ENCODE measurements at regions of chr2 and their contacts with region 1.

Region 1: DNA sequence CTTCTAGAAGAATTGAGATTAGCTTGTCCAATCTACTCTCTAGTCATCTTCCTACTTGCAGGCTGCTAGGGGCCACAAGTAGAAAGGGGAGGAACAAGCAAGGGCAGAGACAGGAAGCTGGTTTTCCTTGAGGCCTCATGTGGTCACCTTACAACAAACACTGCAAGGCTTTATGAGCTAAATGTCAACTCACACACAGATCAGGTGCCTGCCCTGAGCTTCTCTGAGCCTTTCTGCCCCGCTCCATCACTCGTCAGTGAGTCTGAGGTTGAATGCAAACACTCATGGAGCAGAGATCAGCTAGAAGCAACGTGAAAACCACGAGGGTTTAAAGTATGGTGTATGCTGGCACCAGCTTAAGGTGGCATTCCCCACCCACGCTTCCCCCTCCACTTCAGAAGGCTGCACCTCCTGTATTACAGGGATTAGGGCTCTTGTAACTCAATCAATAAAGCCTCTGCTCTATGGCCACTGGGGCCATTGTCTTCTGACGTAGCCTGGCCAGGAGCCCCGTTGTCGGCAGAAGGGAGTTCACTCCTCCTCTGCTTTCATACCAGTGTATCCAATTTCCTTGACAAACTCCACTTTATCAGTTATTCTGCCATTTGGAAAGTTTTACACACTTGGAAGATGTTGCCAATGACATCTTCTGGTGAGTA is 5.4 kb upstream of the CRYGC start:
- DNase-seq: no peak
- H3K4me3 ChIP-seq: no peak overlapping the region
- H3K27ac ChIP-seq: no peak overlapping the region
- H3K4me1 ChIP-seq: peaks cover 0 to 8% (median 0%) of the 10 kb centered on the region in 4 donors
- H3K27me3 ChIP-seq: no peaks in the 10 kb centered on the region
- CTCF ChIP-seq: no peak
- EP300 ChIP-seq: no peak
- POLR2A ChIP-seq: no peak

Region 2: GRCh38 chr2:206832873-206833272 is 1302.2 kb before region 1 on chr2:
- in situ Hi-C with region 1: no loop called
- intact Hi-C with region 1: no loop called
- DNase-seq: no peak
- H3K4me3 ChIP-seq: no peak overlapping the region
- H3K27ac ChIP-seq: no peak overlapping the region
- H3K4me1 ChIP-seq: peaks cover 0 to 6% (median 0%) of the 10 kb centered on the region in 4 donors
- H3K27me3 ChIP-seq: no peaks in the 10 kb centered on the region
- CTCF ChIP-seq: no peak
- EP300 ChIP-seq: no peak
- POLR2A ChIP-seq: no peak

Region 3: DNA sequence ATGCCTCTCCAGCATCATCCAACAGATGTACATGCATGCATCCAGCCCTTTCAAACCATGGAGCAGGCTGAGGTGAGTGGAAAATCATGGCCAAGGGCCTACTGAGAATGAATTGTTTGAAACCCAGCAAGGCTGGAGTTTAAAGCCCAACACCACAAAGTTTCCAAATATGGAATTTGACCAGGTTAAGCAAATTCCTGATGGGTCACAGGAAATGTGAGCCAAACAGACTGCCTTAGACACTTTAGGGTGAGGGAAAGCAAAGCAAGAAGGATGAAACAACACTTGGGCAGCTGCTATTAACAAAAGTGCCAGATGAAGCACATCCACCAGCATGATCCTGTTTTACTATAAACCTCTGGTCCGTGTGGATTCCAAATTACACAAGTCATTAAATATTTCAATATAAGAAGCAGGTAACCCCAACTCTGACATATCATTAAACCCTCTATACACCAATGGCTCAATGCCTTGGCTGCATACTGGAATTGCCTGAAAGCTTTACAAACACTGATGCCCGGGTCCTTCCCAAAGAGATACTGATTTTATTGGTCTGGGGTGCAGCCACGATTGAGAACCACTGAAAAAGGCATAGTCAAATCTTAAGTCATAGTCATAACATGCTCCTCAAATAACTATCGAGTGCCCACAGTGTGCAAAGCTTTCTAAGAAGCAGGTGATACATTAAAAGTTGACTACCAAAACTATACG is 978.5 kb before region 1 on chr2:
- in situ Hi-C with region 1: no loop called
- intact Hi-C with region 1: loop called (anchors 5 kb)
- DNase-seq: no peak
- H3K4me3 ChIP-seq: no peak overlapping the region
- H3K27ac ChIP-seq: peak overlapping the region in 1 of 4 donors; percentile 38
- H3K4me1 ChIP-seq: peaks cover 19 to 81% (median 35%) of the 10 kb centered on the region in 4 donors
- H3K27me3 ChIP-seq: no peaks in the 10 kb centered on the region
- CTCF ChIP-seq: no peak
- EP300 ChIP-seq: no peak
- POLR2A ChIP-seq: no peak

Region 4: DNA sequence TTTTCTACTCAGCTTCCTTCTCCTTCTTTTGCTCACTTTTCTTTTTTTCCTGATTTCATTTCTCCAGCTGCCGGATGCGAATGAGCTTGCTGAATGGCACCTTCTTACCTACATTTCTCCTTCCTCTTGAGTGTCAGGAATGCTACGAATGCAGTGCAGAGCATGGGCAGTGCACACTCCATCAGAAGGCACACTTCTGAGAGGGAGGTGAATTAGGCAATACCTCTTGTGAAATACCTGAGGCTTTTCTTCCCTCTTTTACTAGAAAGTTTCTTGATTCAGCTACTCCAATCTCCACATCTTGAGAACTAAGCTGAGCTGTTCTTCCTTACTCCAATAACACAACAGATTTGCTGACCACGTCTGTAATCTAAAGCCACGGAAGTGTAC is 160.8 kb before region 1 on chr2:
- in situ Hi-C with region 1: no loop called
- intact Hi-C with region 1: no loop called
- DNase-seq: no peak
- H3K4me3 ChIP-seq: no peak overlapping the region
- H3K27ac ChIP-seq: no peak overlapping the region
- H3K4me1 ChIP-seq: peaks cover 11 to 27% (median 19%) of the 10 kb centered on the region in 4 donors
- H3K27me3 ChIP-seq: no peaks in the 10 kb centered on the region
- CTCF ChIP-seq: no peak
- EP300 ChIP-seq: no peak
- POLR2A ChIP-seq: no peak